PC-9 (cell line): ENCODE measurements at regions of chr11 and their contacts with region 1.

Region 1: GRCh38 chr11:28674433-28675103 is 566.4 kb downstream of the METTL15 start:
- DNase-seq: peak in 1 of 2 experiments; percentile 22
- H3K4me3 ChIP-seq: no peak overlapping the region
- H3K27ac ChIP-seq: no peak overlapping the region
- H3K4me1 ChIP-seq: no peaks in the 10 kb centered on the region
- H3K27me3 ChIP-seq: no peaks in the 10 kb centered on the region
- CTCF ChIP-seq: peak; percentile 30; the same call in 1 of the 2 replicates

Region 2: GRCh38 chr11:28343276-28344233 is 331.0 kb before region 1 on chr11:
- CTCF ChIA-PET with region 1: no interaction called
- POLR2A ChIA-PET with region 1: no interaction called
- intact Hi-C with region 1: loop called (anchors 10 kb)
- DNase-seq: peak; percentile 38 to 61
- H3K4me3 ChIP-seq: no peak overlapping the region
- H3K27ac ChIP-seq: peak overlapping the region; percentile 81
- H3K4me1 ChIP-seq: peaks cover 37% of the 10 kb centered on the region
- H3K27me3 ChIP-seq: no peaks in the 10 kb centered on the region
- CTCF ChIP-seq: no peak

Region 3: GRCh38 chr11:28566339-28567089 is 108.1 kb before region 1 on chr11:
- CTCF ChIA-PET with region 1: no interaction called
- POLR2A ChIA-PET with region 1: no interaction called
- intact Hi-C with region 1: no loop called
- DNase-seq: peak in 1 of 2 experiments; percentile 49
- H3K4me3 ChIP-seq: no peak overlapping the region
- H3K27ac ChIP-seq: no peak overlapping the region
- H3K4me1 ChIP-seq: no peaks in the 10 kb centered on the region
- H3K27me3 ChIP-seq: no peaks in the 10 kb centered on the region
- CTCF ChIP-seq: no peak

Region 4: GRCh38 chr11:28793282-28793738 is 118.7 kb after region 1 on chr11:
- CTCF ChIA-PET with region 1: no interaction called
- POLR2A ChIA-PET with region 1: no interaction called
- intact Hi-C with region 1: no loop called
- DNase-seq: no peak
- H3K4me3 ChIP-seq: no peak overlapping the region
- H3K27ac ChIP-seq: no peak overlapping the region
- H3K4me1 ChIP-seq: no peaks in the 10 kb centered on the region
- H3K27me3 ChIP-seq: no peaks in the 10 kb centered on the region
- CTCF ChIP-seq: no peak

Region 5: GRCh38 chr11:29200791-29201562 is 526.4 kb after region 1 on chr11:
- CTCF ChIA-PET with region 1: no interaction called
- POLR2A ChIA-PET with region 1: no interaction called
- intact Hi-C with region 1: no loop called
- DNase-seq: peak in 1 of 2 experiments; percentile 8
- H3K4me3 ChIP-seq: no peak overlapping the region
- H3K27ac ChIP-seq: no peak overlapping the region
- H3K4me1 ChIP-seq: no peaks in the 10 kb centered on the region
- H3K27me3 ChIP-seq: no peaks in the 10 kb centered on the region
- CTCF ChIP-seq: no peak